ENCODE measurements at regions of chr9 and their contacts with region 1.

Region 1: GRCh38 chr9:22244141-22245011 is 202.2 kb upstream of the DMRTA1 start:
- DNase-seq: no peak
- ATAC-seq: peak; percentile 54
- H3K4me3 Mint-ChIP-seq: no peak overlapping the region
- H3K27ac Mint-ChIP-seq: no peak overlapping the region
- H3K4me1 Mint-ChIP-seq: peaks cover 39% of the 10 kb centered on the region
- H3K27me3 Mint-ChIP-seq: peaks cover 15% of the 10 kb centered on the region
- CTCF ChIP-seq: no peak

Region 2: DNA sequence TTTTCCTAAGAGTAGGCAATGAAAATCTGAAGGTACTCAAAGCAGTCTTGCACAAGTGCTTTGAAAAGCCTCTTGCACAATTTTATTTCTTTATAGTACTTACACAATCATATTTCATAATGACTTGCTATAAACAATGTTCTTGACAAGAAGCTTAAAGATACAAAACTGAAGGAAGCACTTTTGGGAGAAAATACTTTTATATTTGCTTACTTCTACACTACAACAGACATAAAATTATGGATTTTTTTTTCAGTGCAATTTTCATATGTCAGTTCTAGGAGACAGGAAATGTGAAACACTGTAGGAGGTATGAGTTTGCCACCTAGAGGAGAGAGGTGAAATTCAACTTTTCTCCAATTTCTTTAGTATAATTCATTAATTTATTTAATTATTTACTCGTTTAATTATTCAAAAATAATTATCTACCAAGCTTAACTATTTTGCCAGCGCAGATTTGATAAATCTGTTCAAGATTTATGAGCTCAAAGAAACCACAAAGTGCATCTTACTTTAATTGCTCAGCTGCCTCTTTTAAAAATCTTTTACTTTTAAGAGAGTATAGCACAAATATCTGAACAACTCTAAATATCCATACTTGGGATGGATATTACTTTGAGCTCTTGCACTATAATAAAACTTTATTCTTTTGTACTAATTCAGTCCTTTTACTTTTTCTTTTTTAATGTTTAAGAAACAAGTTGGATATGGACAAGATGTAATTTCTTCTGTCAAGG is 206.3 kb before region 1 on chr9:
- CTCF ChIA-PET with region 1: interaction called, 15 read pairs
- POLR2A ChIA-PET with region 1: no interaction called
- intact Hi-C with region 1: loop called (anchors 2 kb)
- DNase-seq: no peak
- ATAC-seq: no peak
- H3K4me3 Mint-ChIP-seq: no peak overlapping the region
- H3K27ac Mint-ChIP-seq: no peak overlapping the region
- H3K4me1 Mint-ChIP-seq: no peaks in the 10 kb centered on the region
- H3K27me3 Mint-ChIP-seq: no peaks in the 10 kb centered on the region
- CTCF ChIP-seq: no peak

Region 3: DNA sequence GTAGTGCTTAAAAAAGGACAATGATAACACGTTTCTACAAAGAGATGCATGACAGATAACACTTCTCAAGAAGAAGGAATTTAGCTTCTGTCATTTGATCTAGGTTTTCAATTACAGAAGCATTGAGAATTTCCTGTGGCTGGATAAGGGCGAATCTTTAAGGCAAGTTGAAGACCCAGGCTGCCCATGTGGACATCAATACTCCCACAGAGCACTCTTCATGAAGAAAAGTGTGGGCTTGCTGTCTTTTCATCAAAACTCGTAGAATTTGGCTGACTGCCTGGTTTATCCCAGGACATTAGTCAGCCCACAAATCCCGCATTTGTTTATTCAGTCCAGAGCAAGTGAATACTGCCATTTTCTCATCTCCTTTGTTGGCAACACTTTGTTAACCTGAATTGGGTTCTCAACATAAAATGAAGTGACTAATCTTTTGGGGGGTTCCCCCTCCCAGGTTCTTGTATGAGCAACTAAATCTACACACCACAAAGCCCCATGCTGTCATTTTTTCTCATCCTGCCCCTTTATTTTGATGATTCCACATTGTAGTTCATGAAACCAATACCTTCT is 191.9 kb before region 1 on chr9:
- CTCF ChIA-PET with region 1: interaction called, 13 read pairs
- POLR2A ChIA-PET with region 1: interaction called, 4 read pairs
- intact Hi-C with region 1: loop called (anchors 5 kb)
- DNase-seq: no peak
- ATAC-seq: no peak
- H3K4me3 Mint-ChIP-seq: no peak overlapping the region
- H3K27ac Mint-ChIP-seq: no peak overlapping the region
- H3K4me1 Mint-ChIP-seq: peaks cover 32% of the 10 kb centered on the region
- H3K27me3 Mint-ChIP-seq: no peaks in the 10 kb centered on the region
- CTCF ChIP-seq: no peak